Activated CD4-positive, alpha-beta T cell treated with anti-CD3 and anti-CD28 coated beads for 36 hours (primary cell): ENCODE measurements at regions of chr12 and their contacts with region 1.

Region 1: DNA sequence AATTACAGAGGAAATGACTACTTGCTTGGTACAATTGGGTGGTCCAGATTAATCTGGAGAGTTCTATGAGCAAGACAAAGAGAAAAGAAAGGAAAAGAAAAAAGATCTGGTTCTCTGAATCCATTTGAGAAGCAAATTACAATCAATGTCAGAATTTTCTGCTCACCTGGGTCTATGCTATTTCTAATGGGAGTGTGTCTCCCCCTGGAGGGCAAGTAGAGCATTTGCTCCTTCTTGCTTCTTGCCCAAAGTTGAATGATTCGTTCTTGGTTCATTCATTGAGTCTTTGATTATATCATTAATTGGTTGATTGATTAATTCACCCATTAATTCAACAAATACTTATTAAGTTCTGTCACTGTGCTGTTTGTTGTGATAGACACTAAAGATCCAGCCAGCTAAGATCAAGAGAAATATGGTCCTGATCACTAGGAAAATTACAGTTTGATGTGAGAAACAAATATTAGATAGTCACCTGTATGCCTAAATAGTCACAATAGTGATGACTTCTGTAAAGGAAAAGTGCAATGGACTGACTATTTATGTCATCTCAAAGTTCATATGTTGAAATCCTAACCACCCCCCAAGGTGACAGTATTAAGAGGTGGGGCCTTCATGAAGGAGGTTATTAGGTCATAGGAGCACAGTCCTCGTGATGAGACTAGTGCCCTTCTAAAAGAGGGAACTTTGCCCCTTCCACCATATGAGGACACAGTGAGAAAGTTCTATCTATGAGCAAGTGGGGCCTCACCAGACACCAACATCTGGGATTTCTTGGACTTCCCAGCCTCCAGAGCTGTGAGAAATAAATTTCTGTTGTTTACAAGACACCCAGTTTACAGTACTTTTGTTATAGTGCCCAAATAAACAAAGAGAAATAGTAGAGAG is 8.0 kb upstream of the ASB8 start:
- DNase-seq: peak; percentile 62
- ATAC-seq: peak; percentile 84
- H3K4me3 Mint-ChIP-seq: no peak overlapping the region
- H3K27ac Mint-ChIP-seq: no peak overlapping the region
- H3K4me1 Mint-ChIP-seq: peaks cover 7% of the 10 kb centered on the region
- H3K27me3 Mint-ChIP-seq: no peaks in the 10 kb centered on the region

Region 2: GRCh38 chr12:48084066-48084465 is 81.3 kb before region 1 on chr12:
- CTCF ChIA-PET with region 1: interaction called, 5 read pairs
- POLR2A ChIA-PET with region 1: no interaction called
- intact Hi-C with region 1: loop called in 1 of 2 experiments (anchors 1 kb)
- DNase-seq: no peak
- ATAC-seq: no peak
- H3K4me3 Mint-ChIP-seq: no peak overlapping the region
- H3K27ac Mint-ChIP-seq: no peak overlapping the region
- H3K4me1 Mint-ChIP-seq: no peaks in the 10 kb centered on the region
- H3K27me3 Mint-ChIP-seq: no peaks in the 10 kb centered on the region

Region 3: DNA sequence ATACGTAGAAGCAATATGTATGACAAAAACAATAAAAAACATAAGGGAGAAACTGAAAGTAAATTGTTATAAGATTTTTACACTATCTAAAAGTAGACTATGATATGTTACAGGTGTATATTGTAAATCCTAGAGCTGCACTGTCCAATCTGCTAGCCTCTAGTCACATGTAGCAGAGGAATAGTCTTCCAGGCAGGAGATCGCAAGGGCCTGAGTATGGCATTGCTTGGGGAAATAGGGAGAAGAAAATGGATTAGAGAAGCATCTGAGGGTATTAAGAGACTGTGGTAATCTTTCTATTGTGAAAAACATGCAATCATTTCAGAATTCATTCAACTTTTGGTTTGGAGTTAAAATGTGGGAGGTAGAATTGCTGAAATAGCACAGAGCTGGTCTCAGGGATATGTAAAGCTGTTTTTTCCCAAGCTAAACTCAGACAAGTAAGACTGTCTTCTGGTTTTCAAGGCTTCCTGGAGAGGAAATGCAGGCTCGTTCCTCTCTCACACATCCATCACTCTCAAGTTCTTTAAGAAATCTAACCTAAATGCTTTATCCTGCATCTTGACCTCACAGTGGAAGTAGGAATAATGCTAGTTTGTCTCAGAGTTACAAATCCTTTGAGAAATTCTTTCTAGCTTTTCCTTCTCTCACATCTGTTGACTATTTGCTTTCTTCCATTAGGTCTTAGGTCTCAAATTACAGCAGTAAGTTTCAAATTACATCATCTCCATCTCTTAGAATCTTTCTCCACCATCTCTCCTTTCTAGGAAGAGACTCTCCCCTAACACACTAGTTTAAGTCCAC is 10.5 kb after region 1 on chr12:
- CTCF ChIA-PET with region 1: interaction called, 23 read pairs
- POLR2A ChIA-PET with region 1: no interaction called
- intact Hi-C with region 1: no loop called
- DNase-seq: no peak
- ATAC-seq: no peak
- H3K4me3 Mint-ChIP-seq: no peak overlapping the region
- H3K27ac Mint-ChIP-seq: no peak overlapping the region
- H3K4me1 Mint-ChIP-seq: peaks cover 8% of the 10 kb centered on the region
- H3K27me3 Mint-ChIP-seq: peaks cover 6% of the 10 kb centered on the region